A549 (cell line): ENCODE measurements at regions of chr1 and their contacts with region 1.

Region 1: DNA sequence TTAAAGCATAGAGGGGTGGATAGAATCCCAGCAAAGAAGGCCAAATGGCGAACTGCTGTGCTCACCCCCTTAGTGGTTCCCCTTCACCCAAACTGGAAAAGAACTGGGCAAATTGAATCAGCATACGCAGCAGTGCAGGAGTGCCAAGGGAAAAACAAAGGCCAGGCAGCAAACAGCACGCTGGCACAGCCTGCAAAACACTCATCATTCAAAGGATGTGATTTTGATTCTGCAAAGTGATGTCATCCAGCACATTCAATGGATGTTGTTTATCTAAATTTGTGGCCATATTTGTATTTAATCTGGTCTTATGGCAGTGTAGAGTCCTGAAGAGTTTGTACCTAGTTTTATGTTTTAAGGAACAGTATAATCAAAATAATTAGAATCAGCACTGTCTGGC is 71.8 kb upstream of the ECE1 start:
- DNase-seq: no peak
- ATAC-seq: no peak
- H3K4me3 ChIP-seq: no peak overlapping the region
- H3K27ac ChIP-seq: no peak overlapping the region; a peak in 1 of 6 replicates
- H3K4me1 ChIP-seq: no peaks in the 10 kb centered on the region
- CTCF ChIP-seq: no peak
- EP300 ChIP-seq: no peak
- POLR2A ChIP-seq: no peak
- RAD21 ChIP-seq: no peak

Region 2: DNA sequence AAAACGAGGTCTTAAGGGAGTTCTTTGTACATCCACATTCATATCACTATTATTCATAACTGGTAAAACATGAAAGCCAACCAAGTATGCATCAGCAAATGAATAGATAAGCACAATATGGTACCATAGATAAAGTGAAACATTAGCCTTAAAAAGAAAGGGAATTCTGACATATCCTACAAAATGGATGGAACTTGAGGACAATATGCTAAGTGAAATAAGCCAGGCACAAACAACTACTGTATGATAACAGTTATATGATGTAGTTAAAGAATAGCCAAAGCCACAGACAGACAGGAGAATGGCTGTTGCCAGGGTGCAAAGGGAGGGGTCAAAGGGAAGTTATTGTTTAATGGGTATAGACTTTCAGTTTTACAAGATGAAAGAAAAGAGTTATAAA is 334.3 kb before region 1 on chr1:
- CTCF ChIA-PET with region 1: no interaction called
- POLR2A ChIA-PET with region 1: no interaction called
- DNase-seq: no peak
- ATAC-seq: no peak
- H3K4me3 ChIP-seq: no peak overlapping the region
- H3K27ac ChIP-seq: no peak overlapping the region
- H3K4me1 ChIP-seq: peaks cover 52% of the 10 kb centered on the region
- CTCF ChIP-seq: no peak
- EP300 ChIP-seq: no peak
- POLR2A ChIP-seq: no peak
- RAD21 ChIP-seq: no peak

Region 3: DNA sequence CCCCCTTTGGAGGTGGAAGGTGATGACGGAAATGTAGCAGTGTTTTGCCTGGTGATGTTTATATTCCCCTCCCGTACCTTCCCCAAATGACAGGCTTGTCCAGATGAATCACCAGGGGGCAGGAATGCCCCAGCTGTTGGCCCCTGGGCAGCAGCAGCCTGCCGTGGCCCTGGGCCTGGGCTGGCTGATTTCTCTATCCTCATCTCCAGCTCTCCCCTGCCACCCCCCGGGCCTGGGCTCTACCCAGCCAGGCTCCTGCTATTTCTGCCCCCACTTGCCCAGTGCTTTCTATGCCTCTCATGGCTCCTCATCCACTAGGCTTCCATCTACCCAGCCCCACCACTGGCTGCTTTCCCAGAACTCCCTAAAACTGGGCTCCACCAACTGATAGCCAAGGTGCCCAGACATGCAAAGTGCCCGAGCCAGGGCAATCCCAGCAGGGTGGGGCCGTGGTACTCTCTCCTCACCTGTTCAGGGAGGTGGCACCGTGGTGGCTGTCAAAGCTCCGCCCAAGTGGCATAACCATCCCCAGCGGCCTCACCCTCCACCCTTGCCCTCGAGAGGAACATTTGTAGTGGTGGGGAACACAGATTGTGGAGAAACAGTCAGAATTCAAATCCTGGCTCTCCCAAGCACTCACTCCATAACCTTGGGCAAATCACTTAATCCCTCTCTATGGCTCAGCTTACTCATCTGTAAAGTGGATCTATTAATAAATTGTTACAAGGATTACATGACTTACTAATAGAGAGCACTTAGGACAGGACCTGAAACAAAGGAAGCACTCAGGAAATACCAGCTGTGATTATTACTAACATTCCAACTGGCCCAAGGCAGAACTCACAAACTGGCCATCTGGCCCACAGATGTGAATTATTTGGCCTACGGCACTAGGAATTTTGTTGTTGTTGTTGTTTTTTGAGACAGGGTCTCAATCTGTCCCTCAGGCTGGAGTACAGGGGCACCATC is 59.1 kb before region 1 on chr1:
- CTCF ChIA-PET with region 1: interaction called, 13 read pairs
- POLR2A ChIA-PET with region 1: no interaction called
- DNase-seq: no peak
- ATAC-seq: peak; percentile 71 to 72; a peak in 5 of 6 replicates
- H3K4me3 ChIP-seq: no peak overlapping the region
- H3K27ac ChIP-seq: peak overlapping the region; percentile 53 to 72; a peak in 5 of 6 replicates
- H3K4me1 ChIP-seq: peaks cover 23% of the 10 kb centered on the region
- CTCF ChIP-seq: peak; percentile 29; the same call in 2 of the 3 replicates
- EP300 ChIP-seq: no peak
- POLR2A ChIP-seq: no peak
- RAD21 ChIP-seq: peak; percentile 46 to 60; a peak in 4 of 5 replicates

Region 4: DNA sequence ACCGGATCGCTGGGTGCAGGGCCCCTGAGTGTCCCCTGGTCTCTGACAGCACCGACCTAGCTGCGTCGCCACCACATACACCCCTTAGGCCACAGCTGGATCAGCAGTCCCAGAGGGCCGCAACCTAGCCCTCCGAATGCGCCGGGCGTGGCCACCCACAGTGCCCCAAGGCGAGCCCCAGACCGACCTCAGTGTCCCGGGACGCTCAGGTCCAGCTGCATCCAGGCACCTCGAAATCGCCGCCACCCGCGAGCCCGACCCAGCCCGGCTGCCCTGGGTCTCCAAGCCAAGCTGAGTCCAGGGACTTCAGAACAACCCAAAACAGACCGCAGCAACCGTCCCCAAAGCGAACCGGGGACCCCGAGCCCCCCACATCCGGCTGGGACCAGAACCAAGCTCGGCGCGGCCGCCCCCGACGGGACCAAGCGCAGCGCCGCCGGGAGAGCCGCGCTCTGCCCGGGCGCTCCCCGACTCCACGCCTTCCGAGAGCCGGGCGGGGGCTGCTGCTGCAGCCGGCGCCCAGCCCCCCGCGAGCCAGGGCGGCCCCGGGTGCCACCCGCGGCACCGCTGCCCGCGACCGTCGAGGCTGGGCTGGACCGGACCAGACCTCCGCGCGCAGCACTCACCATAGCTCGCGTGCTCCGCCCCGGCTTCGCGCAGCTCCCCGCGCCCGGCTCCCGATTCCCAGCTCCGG is 17.2 kb before region 1 on chr1:
- CTCF ChIA-PET with region 1: no interaction called
- POLR2A ChIA-PET with region 1: no interaction called
- DNase-seq: no peak
- ATAC-seq: peak; percentile 25 to 55
- H3K4me3 ChIP-seq: peak overlapping the region; percentile 75
- H3K27ac ChIP-seq: peak overlapping the region; percentile 76 to 93
- H3K4me1 ChIP-seq: peaks cover 42% of the 10 kb centered on the region
- CTCF ChIP-seq: no peak
- EP300 ChIP-seq: no peak
- POLR2A ChIP-seq: no peak
- RAD21 ChIP-seq: no peak

Region 5: GRCh38 chr1:21896652-21897532 is 534.8 kb after region 1 on chr1:
- CTCF ChIA-PET with region 1: no interaction called
- POLR2A ChIA-PET with region 1: no interaction called
- DNase-seq: no peak
- ATAC-seq: no peak
- H3K4me3 ChIP-seq: no peak overlapping the region
- H3K27ac ChIP-seq: peak overlapping the region in 1 of 2 experiments; percentile 35; a peak in 1 of 6 replicates
- H3K4me1 ChIP-seq: peaks cover 8% of the 10 kb centered on the region; the same call in 2 of the 3 replicates
- CTCF ChIP-seq: no peak
- EP300 ChIP-seq: no peak
- POLR2A ChIP-seq: no peak
- RAD21 ChIP-seq: no peak